ENCODE measurements at regions of chr2 and their contacts with region 1.

Region 1: GRCh38 chr2:181742922-181743722 is 62.8 kb upstream of the NEUROD1 start:
- DNase-seq: no peak
- ATAC-seq: no peak

Region 2: DNA sequence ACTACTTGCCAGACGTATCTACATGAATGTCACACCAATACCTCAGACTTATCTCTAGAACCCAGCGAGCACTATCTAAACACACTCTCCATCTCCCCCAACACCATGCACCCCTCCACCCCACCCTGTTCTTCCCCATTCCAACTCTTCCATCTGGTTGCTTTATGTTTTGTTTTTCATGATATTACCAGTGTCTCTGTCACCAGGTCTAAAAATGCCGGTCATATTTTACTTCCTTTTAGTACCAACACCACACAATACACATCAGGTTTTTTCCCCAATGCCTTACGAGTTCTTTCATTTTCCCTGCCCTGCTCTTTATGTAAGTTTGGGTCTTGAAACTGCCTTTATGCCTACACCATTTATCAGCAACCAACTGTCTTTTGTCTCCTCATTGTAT is 296.1 kb before region 1 on chr2:
- intact Hi-C with region 1: no loop called
- DNase-seq: no peak
- ATAC-seq: no peak

Region 3: DNA sequence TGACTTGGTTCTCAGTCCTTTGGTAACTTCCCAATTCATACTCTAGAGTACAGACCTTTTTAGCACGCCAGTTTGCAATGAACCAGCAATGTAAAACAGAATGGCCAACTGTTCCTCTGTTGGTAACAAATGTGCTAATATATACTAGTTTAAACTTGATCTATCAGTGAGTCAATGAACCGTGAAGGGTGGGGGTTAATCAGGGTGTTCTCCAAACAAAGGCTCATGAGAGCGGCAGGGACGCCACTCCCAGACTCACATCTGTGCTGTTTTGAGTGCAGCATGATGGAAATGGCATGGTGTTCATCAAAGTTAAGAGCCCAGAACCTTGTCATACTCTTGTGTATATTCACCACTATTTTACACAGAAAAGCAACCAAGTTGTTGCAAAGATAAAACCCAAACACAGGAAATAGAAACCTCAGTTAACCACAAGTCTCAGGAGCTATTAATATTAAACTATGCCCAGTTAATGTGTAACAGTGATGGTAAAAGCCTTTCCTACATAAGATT is 156.5 kb before region 1 on chr2:
- intact Hi-C with region 1: no loop called
- DNase-seq: no peak
- ATAC-seq: no peak

Region 4: GRCh38 chr2:181907057-181907456 is 163.9 kb after region 1 on chr2:
- intact Hi-C with region 1: loop called (anchors 5 kb)
- DNase-seq: no peak
- ATAC-seq: no peak

Region 5: GRCh38 chr2:181953881-181954537 is 210.9 kb after region 1 on chr2:
- intact Hi-C with region 1: loop called (anchors 5 kb)
- DNase-seq: no peak
- ATAC-seq: no peak

Region 6: DNA sequence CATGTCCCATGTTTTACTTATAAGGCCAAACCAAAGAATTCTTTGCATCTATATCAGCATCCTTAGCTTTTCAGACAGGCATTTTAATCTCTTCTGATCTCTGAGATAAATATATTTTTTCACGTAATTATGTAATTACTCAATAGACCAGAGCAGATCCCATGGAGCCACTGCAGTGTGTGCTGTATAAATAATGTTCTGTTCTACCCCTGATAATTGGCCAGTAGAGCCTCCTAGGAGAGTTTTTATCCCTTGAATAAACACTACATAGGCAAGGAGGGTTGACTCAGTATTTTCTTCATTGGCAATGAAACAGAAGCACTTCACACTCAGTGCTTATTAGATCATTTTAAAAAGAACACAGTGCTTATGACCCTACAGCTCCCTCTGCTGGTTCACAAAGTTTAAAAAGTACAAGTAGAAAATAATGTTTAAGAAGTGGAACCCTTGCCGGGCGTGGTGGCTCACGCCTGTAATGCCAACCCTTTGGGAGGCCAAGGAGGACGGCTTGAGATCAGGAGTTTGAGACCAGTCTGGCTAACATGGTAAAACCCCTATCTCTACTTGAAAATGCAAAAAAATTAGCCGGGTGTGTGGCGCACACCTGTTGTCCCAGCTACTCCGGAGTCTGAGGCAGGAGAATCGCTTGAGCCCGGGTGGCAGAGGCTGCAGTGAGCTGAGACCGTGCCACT is 334.5 kb after region 1 on chr2:
- intact Hi-C with region 1: loop called (anchors 1 kb)
- DNase-seq: peak; percentile 66
- ATAC-seq: peak; percentile 96

Region 7: GRCh38 chr2:182650704-182651103 is 907.6 kb after region 1 on chr2:
- intact Hi-C with region 1: loop called (anchors 5 kb)
- DNase-seq: no peak
- ATAC-seq: peak; percentile 71